Activated CD4-positive, alpha-beta T cell treated with anti-CD3 and anti-CD28 coated beads for 36 hours (primary cell): ENCODE measurements at regions of chr17 and their contacts with region 1.

Region 1: GRCh38 chr17:63697341-63698286 is 2.3 kb downstream of the LIMD2 start:
- DNase-seq: peak; percentile 90
- ATAC-seq: peak; percentile 42
- H3K4me3 Mint-ChIP-seq: peak overlapping the region; percentile 79
- H3K27ac Mint-ChIP-seq: peak overlapping the region; percentile 88
- H3K4me1 Mint-ChIP-seq: peaks cover 64% of the 10 kb centered on the region
- H3K27me3 Mint-ChIP-seq: no peaks in the 10 kb centered on the region

Region 2: DNA sequence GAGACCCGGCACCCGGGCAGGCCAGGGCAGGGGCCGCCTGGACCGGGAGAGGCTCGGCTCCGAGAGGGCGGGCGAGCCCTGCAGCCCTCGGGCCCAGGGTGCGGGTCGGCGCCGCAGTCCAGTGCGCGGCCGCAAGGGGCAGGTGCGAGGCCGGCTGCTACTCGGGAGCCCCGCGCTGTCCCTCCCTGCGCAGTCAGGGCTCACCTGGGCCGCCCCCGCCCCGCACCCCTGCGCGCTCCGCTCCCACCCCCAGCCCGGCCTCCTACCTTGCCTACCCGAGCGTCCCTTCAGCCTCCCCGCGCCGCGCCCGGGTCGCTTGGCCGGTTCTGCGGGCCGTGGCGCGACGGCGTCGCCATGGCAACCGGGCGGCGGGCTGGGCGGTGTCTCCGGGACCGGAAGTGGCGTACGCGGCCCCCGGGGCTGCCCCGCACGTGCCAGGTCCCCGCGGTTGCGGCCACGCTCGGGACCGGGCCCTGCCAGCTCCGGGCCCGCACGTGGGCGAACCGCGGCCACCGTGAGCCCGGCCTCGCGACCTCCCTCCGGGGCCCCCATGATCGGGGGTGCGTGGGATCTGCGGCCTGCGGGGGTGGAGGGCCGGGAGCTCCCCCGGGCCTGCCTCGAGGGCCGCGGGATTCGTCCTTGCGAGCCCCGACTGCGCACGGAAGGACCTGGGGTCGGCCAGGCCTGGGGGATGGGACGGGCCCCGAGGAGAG is 251.5 kb before region 1 on chr17 and contains the start of gene CYB561:
- CTCF ChIA-PET with region 1: no interaction called
- POLR2A ChIA-PET with region 1: no interaction called
- intact Hi-C with region 1: loop called in 1 of 2 experiments (anchors 2 kb)
- DNase-seq: peak; percentile 81
- ATAC-seq: peak; percentile 69
- H3K4me3 Mint-ChIP-seq: peak within 1 kb of the TSS; percentile 60
- H3K27ac Mint-ChIP-seq: peak within 1 kb of the TSS; percentile 72
- H3K4me1 Mint-ChIP-seq: peaks cover 23% of the 10 kb centered on the region
- H3K27me3 Mint-ChIP-seq: peaks cover 3% of the 10 kb centered on the region
- total RNA-seq, gene CYB561: 2.5 to 3.0 TPM

Region 3: DNA sequence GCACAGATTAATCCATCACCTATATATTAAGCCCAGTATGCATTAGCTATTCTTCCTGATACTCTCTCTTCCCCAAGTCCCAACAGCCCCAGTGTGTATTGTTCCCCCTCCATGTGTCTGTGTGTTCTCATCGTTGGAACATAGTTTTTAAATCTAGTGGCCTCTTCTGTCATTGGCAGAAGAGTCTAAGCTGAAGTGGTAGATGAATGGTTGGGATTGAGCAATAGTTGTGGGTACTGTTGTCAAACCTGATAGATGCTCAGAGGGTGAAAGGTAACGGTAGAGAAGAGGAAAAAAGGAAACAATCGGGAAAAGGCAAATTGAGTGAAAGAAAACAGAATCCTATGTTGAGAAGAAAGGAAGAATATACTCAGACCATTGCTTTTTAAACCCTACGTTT is 45.5 kb before region 1 on chr17:
- CTCF ChIA-PET with region 1: no interaction called
- POLR2A ChIA-PET with region 1: no interaction called
- intact Hi-C with region 1: no loop called
- DNase-seq: no peak
- ATAC-seq: no peak
- H3K4me3 Mint-ChIP-seq: no peak overlapping the region
- H3K27ac Mint-ChIP-seq: no peak overlapping the region
- H3K4me1 Mint-ChIP-seq: peaks cover 5% of the 10 kb centered on the region
- H3K27me3 Mint-ChIP-seq: no peaks in the 10 kb centered on the region

Region 4: DNA sequence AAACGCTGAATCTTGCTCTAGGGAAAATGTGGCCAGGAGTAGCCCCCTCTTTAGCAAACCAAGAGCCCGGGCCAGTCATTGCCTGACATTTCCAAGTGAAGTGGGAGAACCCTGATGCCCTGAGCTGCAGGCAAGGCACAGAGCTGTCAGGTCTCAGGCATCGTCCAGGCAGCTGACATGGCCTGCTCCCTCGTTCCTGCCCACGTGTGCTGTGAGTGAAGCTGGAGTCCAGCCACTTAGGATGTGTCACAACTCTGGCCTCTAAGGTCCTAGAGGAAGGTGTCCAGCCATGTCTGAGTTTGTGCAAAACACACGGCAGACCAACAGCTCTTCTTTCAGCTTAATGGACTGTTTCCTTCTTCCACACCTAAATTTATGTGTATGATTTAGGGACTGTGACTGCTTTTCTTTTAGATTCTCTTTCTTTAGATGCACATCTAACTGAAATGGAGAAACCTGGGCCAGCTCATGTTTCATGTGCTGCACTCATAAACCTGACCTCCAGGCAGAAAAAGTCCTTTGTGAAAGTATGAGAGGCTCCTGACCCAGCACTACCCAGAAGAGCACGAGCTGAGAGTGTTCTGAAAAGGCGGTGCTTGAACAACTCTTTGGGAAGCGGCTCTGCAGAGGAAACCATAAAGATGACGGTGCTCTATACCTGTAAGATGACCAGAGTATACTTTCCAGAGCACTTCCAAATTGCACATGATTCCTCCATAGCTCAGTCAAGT is 17.1 kb after region 1 on chr17:
- CTCF ChIA-PET with region 1: interaction called, 23 read pairs
- POLR2A ChIA-PET with region 1: interaction called, 13 read pairs
- intact Hi-C with region 1: loop called in 1 of 2 experiments (anchors 2 kb)
- DNase-seq: no peak
- ATAC-seq: no peak
- H3K4me3 Mint-ChIP-seq: no peak overlapping the region
- H3K27ac Mint-ChIP-seq: no peak overlapping the region
- H3K4me1 Mint-ChIP-seq: peaks cover 8% of the 10 kb centered on the region
- H3K27me3 Mint-ChIP-seq: no peaks in the 10 kb centered on the region

Region 5: DNA sequence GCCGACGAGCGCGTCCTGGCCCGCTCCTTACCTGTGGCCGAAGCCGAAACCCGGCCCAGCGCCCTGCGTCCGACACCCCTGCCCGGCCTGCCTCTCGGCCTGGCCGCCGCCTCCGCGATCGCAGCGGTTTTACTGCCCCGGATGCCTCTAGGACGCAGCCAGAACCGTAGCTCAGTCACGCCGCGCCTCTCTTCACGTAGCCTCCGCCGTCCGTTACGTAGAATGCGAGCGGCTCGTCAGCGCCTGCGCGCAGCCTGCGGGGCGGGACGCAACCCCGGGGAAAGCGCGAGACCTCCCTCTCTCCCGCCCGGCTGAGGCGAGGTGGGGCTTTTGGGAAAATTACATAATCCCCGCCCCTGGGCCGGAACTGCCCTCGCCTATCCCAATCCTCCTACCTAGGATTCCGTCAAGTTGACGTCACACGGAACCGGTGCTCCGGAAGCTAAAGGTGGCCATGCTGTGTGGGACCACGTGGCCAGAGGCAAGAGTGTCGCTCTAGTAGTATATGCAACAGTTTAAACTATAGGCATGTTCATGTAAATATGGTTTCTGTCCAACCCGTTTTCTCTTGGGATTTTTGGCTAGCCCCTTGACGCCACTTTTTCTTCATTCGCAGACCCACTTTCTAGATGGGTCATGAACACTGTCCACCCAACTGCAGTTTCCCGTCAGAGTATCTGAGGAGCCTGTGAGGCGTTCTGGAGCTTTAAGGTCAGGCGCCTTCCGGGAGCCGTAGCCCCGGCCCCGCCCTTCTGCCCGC is 75.9 kb after region 1 on chr17 and contains the start of gene CCDC47:
- CTCF ChIA-PET with region 1: interaction called, 3 read pairs
- POLR2A ChIA-PET with region 1: interaction called, 8 read pairs
- intact Hi-C with region 1: loop called (anchors 1 kb)
- DNase-seq: peak; percentile 99
- ATAC-seq: peak; percentile 83
- H3K4me3 Mint-ChIP-seq: peak within 1 kb of the TSS; percentile 98
- H3K27ac Mint-ChIP-seq: peak within 1 kb of the TSS; percentile 97
- H3K4me1 Mint-ChIP-seq: peaks cover 57% of the 10 kb centered on the region
- H3K27me3 Mint-ChIP-seq: no peaks in the 10 kb centered on the region
- total RNA-seq, gene CCDC47: 76.9 to 82.3 TPM

Region 6: DNA sequence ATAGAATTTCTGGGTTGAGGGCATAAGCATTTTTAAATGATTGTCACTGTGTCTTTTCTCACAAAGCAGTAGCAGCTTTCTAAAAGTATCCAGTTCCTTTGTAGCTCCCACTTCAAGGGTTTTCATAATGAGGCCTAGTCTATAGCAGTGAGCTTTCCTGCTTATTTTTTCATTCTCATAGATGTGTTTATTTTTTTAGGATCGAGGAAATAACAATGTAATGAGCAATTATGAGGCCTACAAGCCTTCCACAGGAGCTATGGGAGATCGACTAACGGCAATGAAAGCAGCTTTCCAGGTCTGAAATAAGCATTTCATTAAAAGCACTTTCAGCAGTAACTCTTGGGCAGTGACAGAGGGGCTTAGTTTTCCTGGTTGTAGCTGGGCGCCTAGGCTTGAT is 119.1 kb after region 1 on chr17:
- CTCF ChIA-PET with region 1: no interaction called
- POLR2A ChIA-PET with region 1: no interaction called
- intact Hi-C with region 1: no loop called
- DNase-seq: no peak
- ATAC-seq: no peak
- H3K4me3 Mint-ChIP-seq: no peak overlapping the region
- H3K27ac Mint-ChIP-seq: peak overlapping the region; percentile 1
- H3K4me1 Mint-ChIP-seq: peaks cover 2% of the 10 kb centered on the region
- H3K27me3 Mint-ChIP-seq: no peaks in the 10 kb centered on the region